K562 (cell line): ENCODE measurements at regions of chr5 and their contacts with region 1.

Region 1: DNA sequence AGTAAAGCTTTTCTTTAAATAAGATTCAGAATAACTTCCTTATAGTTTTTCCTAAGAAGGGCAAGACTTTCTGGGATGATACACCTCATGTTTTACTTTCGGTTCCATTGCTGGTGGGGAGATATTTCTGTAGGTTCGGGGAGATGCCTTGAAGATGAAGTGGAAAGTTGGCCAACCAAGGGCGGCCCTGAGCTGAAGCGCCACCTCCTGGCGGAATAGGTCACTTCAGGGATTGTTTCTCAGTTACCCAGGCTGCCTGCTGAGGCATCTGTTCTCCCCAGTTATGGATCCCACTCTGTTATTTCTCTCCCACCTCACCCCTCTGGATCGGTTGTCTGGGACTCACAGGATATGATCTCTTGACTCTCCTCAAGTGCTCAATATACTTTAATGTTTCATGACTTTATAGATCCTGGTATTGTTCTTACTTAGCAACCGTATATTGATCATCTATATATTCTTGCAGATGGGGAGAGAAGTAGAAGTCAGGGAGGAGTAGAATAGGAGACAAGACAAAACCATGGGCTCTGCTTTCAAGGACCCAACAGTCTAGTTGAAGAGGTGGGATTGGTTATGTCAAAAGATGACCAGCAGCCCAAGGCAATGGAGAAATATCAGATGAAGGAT is 23.4 kb downstream of the MEGF10 start:
- DNase-seq: peak; percentile 70 to 72 (median 71)
- ATAC-seq: peak; percentile 96
- H3K4me3 ChIP-seq: no peak overlapping the region
- H3K27ac ChIP-seq: no peak overlapping the region
- H3K4me1 ChIP-seq: no peaks in the 10 kb centered on the region
- H3K27me3 ChIP-seq: 0 out of 5 replicates have a peak, but pooled peaks cover 0 to 4% of the 10 kb centered on the region in 2 experiments
- CTCF ChIP-seq: peak; percentile 78 to 88 (median 79)
- EP300 ChIP-seq: no peak
- POLR2A ChIP-seq: no peak
- RAD21 ChIP-seq: peak; percentile 65 to 75

Region 2: GRCh38 chr5:126641387-126641786 is 672.6 kb before region 1 on chr5:
- CTCF ChIA-PET with region 1: interaction called, 3 read pairs
- POLR2A ChIA-PET with region 1: no interaction called
- in situ Hi-C with region 1: loop called (anchors 25 kb)
- intact Hi-C with region 1: no loop called
- DNase-seq: no peak
- ATAC-seq: peak; percentile 67
- H3K4me3 ChIP-seq: no peak overlapping the region
- H3K27ac ChIP-seq: no peak overlapping the region
- H3K4me1 ChIP-seq: no peaks in the 10 kb centered on the region; a peak in 1 of 5 replicates
- H3K27me3 ChIP-seq: no peaks in the 10 kb centered on the region; a peak in 1 of 5 replicates
- CTCF ChIP-seq: no peak
- EP300 ChIP-seq: no peak
- POLR2A ChIP-seq: no peak
- RAD21 ChIP-seq: no peak

Region 3: GRCh38 chr5:126837906-126838539 is 475.9 kb before region 1 on chr5:
- CTCF ChIA-PET with region 1: interaction called, 16 read pairs
- POLR2A ChIA-PET with region 1: no interaction called
- in situ Hi-C with region 1: no loop called
- intact Hi-C with region 1: no loop called
- DNase-seq: peak in 1 of 4 experiments; percentile 12
- ATAC-seq: peak; percentile 54
- H3K4me3 ChIP-seq: no peak overlapping the region
- H3K27ac ChIP-seq: no peak overlapping the region
- H3K4me1 ChIP-seq: no peaks in the 10 kb centered on the region; a peak in 1 of 5 replicates
- H3K27me3 ChIP-seq: no peaks in the 10 kb centered on the region
- CTCF ChIP-seq: peak in 2 of 3 experiments; percentile 32 to 47; a peak in 3 of 6 replicates
- EP300 ChIP-seq: no peak
- POLR2A ChIP-seq: no peak
- RAD21 ChIP-seq: peak; percentile 41 to 68; a peak in 3 of 4 replicates

Region 4: DNA sequence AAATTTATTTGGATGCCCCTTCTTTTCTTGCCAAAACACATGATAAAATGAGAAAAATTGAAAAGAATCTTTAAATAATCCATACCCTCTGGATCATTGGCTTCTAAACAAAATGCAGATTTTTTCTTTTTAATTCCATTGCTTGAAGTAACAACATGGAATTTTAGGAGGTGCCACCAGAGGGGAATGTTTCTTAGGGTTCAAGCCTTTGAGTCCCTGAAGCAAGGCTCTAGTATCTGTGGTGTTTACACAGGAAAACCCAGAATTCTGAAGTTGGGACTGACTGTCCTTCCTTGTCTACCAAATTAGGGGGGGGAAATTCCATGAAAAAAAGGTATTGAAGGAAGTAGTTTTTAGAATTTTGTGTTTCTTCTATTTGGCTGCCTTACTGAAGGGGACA is 467.6 kb before region 1 on chr5:
- CTCF ChIA-PET with region 1: no interaction called
- POLR2A ChIA-PET with region 1: no interaction called
- in situ Hi-C with region 1: no loop called
- intact Hi-C with region 1: loop called (anchors 5 kb)
- DNase-seq: peak in 1 of 4 experiments; percentile 30
- ATAC-seq: peak; percentile 56
- H3K4me3 ChIP-seq: no peak overlapping the region
- H3K27ac ChIP-seq: no peak overlapping the region
- H3K4me1 ChIP-seq: peaks cover 13 to 31% of the 10 kb centered on the region in 2 experiments; a peak in 4 of 5 replicates
- H3K27me3 ChIP-seq: no peaks in the 10 kb centered on the region
- CTCF ChIP-seq: peak; percentile 29 to 45 (median 38); a peak in 4 of 6 replicates
- EP300 ChIP-seq: no peak
- POLR2A ChIP-seq: no peak
- RAD21 ChIP-seq: peak; percentile 43 to 57

Region 5: GRCh38 chr5:127206320-127207113 is 107.4 kb before region 1 on chr5:
- CTCF ChIA-PET with region 1: no interaction called
- POLR2A ChIA-PET with region 1: no interaction called
- in situ Hi-C with region 1: no loop called
- intact Hi-C with region 1: no loop called
- DNase-seq: no peak
- ATAC-seq: no peak
- H3K4me3 ChIP-seq: no peak overlapping the region
- H3K27ac ChIP-seq: no peak overlapping the region
- H3K4me1 ChIP-seq: no peaks in the 10 kb centered on the region
- H3K27me3 ChIP-seq: no peaks in the 10 kb centered on the region
- CTCF ChIP-seq: no peak
- EP300 ChIP-seq: no peak
- POLR2A ChIP-seq: no peak
- RAD21 ChIP-seq: no peak